Activated CD4-positive, alpha-beta T cell treated with anti-CD3 and anti-CD28 coated beads for 36 hours (primary cell): ENCODE measurements at regions of chr21 and their contacts with region 1.

Region 1: DNA sequence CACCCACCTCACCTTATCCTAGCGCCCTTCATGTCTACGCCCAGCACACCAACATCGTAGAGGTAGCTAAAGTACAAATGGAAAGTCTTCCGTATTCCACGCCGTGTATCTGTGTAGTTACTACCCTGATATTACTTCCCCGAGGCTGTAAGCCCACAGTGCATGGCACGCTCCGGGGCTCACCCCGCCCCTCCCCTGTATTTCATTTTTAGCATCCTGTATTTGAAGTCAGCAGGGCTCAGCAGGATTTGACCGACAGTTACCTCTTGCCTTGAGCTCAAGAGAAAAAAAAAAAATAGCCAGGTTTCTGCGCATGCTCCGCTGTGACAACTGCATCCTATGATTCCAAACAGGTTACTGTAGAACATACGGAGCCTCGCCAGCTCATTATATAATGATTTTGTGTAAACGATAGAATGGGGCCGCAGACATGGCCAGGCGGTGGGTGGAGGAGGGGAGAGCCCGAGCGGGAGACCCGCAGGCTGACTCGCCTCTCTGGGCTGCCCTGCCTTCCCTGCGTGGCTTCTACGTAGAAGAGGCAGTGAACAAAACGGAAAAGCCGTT is 1.3 kb downstream of the ABCG1 start:
- DNase-seq: peak; percentile 82
- ATAC-seq: peak; percentile 89
- H3K4me3 Mint-ChIP-seq: peak overlapping the region; percentile 90
- H3K27ac Mint-ChIP-seq: peak overlapping the region; percentile 96
- H3K4me1 Mint-ChIP-seq: peaks cover 24% of the 10 kb centered on the region
- H3K27me3 Mint-ChIP-seq: no peaks in the 10 kb centered on the region

Region 2: GRCh38 chr21:42145569-42146272 is 74.5 kb before region 1 on chr21:
- CTCF ChIA-PET with region 1: interaction called, 12 read pairs
- POLR2A ChIA-PET with region 1: no interaction called
- intact Hi-C with region 1: no loop called
- DNase-seq: peak; percentile 80
- ATAC-seq: peak; percentile 81
- H3K4me3 Mint-ChIP-seq: no peak overlapping the region
- H3K27ac Mint-ChIP-seq: peak overlapping the region; percentile 38
- H3K4me1 Mint-ChIP-seq: peaks cover 10% of the 10 kb centered on the region
- H3K27me3 Mint-ChIP-seq: peaks cover 2% of the 10 kb centered on the region

Region 3: GRCh38 chr21:42164064-42164789 is 56.0 kb before region 1 on chr21:
- CTCF ChIA-PET with region 1: interaction called, 5 read pairs
- POLR2A ChIA-PET with region 1: no interaction called
- intact Hi-C with region 1: loop called in 1 of 2 experiments (anchors 2 kb)
- DNase-seq: peak; percentile 79
- ATAC-seq: peak; percentile 72
- H3K4me3 Mint-ChIP-seq: no peak overlapping the region
- H3K27ac Mint-ChIP-seq: peak overlapping the region; percentile 17
- H3K4me1 Mint-ChIP-seq: peaks cover 31% of the 10 kb centered on the region
- H3K27me3 Mint-ChIP-seq: no peaks in the 10 kb centered on the region

Region 4: GRCh38 chr21:42187976-42188653 is 32.1 kb before region 1 on chr21:
- CTCF ChIA-PET with region 1: interaction called, 4 read pairs
- POLR2A ChIA-PET with region 1: interaction called, 3 read pairs
- intact Hi-C with region 1: loop called in 1 of 2 experiments (anchors 1 kb)
- DNase-seq: peak; percentile 88
- ATAC-seq: peak; percentile 93
- H3K4me3 Mint-ChIP-seq: peak overlapping the region; percentile 57
- H3K27ac Mint-ChIP-seq: peak overlapping the region; percentile 95
- H3K4me1 Mint-ChIP-seq: peaks cover 65% of the 10 kb centered on the region
- H3K27me3 Mint-ChIP-seq: peaks cover 2% of the 10 kb centered on the region

Region 5: GRCh38 chr21:42199488-42200458 is 20.4 kb before region 1 on chr21:
- CTCF ChIA-PET with region 1: interaction called, 4 read pairs
- POLR2A ChIA-PET with region 1: interaction called, 3 read pairs
- intact Hi-C with region 1: loop called in 1 of 2 experiments (anchors 1 kb)
- DNase-seq: no peak
- ATAC-seq: peak; percentile 85
- H3K4me3 Mint-ChIP-seq: no peak overlapping the region
- H3K27ac Mint-ChIP-seq: peak overlapping the region; percentile 83
- H3K4me1 Mint-ChIP-seq: peaks cover 58% of the 10 kb centered on the region
- H3K27me3 Mint-ChIP-seq: no peaks in the 10 kb centered on the region

Region 6: GRCh38 chr21:42238185-42238934 is 18.1 kb after region 1 on chr21:
- CTCF ChIA-PET with region 1: interaction called, 33 read pairs
- POLR2A ChIA-PET with region 1: interaction called, 19 read pairs
- intact Hi-C with region 1: loop called (anchors 1 kb)
- DNase-seq: peak; percentile 61
- ATAC-seq: peak; percentile 7
- H3K4me3 Mint-ChIP-seq: peak overlapping the region; percentile 50
- H3K27ac Mint-ChIP-seq: peak overlapping the region; percentile 92
- H3K4me1 Mint-ChIP-seq: peaks cover 59% of the 10 kb centered on the region
- H3K27me3 Mint-ChIP-seq: no peaks in the 10 kb centered on the region

Region 7: GRCh38 chr21:42369821-42370220 is 149.6 kb after region 1 on chr21:
- CTCF ChIA-PET with region 1: no interaction called
- POLR2A ChIA-PET with region 1: no interaction called
- intact Hi-C with region 1: no loop called
- DNase-seq: no peak
- ATAC-seq: no peak
- H3K4me3 Mint-ChIP-seq: no peak overlapping the region
- H3K27ac Mint-ChIP-seq: peak overlapping the region; percentile 8
- H3K4me1 Mint-ChIP-seq: peaks cover 43% of the 10 kb centered on the region
- H3K27me3 Mint-ChIP-seq: no peaks in the 10 kb centered on the region

Region 8: DNA sequence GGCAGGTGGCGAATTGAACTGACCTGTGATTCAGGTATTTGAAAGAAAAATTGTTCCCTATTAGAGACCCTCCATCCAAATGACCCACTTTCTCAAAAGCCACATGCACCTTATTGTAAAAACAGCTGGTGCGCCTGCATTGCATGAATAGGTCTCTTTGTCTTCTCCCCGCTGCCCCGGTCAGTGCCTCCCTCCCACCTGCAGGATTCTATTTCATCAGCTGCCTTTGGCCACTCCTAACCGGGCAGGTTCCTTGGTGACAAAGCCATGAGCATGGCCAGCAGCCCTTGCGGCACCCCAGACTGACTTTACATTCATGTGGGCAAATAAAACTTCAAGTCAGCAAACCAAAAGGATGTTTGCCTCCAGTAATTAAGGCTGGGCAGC is 169.2 kb after region 1 on chr21:
- CTCF ChIA-PET with region 1: no interaction called
- POLR2A ChIA-PET with region 1: no interaction called
- intact Hi-C with region 1: no loop called
- DNase-seq: no peak
- ATAC-seq: no peak
- H3K4me3 Mint-ChIP-seq: no peak overlapping the region
- H3K27ac Mint-ChIP-seq: no peak overlapping the region
- H3K4me1 Mint-ChIP-seq: peaks cover 90% of the 10 kb centered on the region
- H3K27me3 Mint-ChIP-seq: no peaks in the 10 kb centered on the region